ENCODE measurements at regions of chr7 and their contacts with region 1.

Region 1: DNA sequence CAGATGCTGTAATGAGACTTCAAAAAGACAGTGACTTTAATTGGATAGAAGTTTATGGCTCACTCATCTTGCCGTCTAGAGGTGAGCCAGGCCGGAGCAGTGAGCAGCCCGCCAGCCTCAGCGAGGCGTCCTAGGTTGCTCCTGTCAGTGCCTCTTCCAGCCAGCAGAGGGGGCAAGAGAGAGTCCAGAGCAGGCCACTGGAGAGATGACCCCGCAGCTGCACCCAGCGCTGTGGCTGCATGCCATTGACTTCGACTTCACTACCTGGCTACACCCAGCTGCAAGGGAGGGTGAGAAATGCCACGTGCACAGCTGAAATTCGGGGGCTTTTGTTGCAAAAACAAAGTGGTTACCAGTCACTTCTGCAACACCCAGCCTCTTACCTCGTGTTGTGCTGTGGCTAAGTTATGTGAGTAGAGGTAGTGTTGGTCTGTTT is 26.5 kb downstream of the NUB1 start:
- DNase-seq: peak; percentile 90
- ATAC-seq: peak; percentile 96

Region 2: GRCh38 chr7:151432791-151433521 is 64.8 kb after region 1 on chr7:
- intact Hi-C with region 1: no loop called
- DNase-seq: no peak
- ATAC-seq: no peak

Region 3: DNA sequence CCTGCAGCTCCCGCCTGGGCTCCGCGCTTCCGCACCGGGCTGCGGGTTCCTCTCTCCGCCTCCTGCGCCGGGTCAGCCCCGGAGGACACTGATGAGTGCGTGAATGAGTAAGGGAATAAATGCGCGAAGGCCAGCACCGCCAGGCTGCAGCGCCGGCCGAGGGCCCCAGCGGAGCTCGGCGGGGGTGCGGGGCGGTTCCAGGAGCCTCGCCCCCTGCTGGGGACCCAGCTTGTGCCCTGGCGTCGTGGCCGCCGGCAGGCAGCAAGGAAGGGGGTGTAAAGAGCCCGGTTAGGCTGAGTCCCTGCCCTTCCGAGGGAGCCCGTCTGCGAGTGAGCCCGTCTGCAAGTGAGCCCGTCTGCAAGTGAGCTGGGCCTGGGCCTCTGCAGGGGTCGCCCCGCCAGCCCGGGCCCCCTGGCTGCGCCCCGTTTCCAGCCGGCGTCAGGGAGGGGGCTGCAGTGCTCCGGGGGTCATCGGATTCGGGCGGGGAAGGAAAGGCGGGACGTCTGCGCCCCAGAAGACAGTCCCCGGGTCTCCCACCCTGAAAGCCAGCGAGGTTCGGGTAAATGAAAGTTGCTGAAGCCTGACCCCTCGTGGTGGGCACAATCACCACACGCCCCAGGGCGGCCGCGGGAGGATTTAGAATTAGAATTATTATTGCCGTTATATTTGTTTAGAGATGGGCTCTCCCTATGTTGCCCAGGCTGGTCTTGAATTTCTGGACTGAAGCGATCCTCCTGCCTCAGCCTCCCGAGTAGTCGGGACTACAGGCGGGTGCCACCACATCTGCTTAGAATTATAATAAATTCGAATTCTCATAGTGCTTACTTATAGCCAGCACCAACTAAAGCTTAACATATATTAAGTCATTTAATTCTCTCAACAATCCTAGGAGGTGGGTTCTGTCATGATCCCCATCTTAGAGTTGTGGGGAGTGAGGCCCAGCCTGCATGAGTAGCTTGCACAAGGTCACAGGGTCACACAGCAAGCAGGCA is 80.4 kb after region 1 on chr7:
- intact Hi-C with region 1: loop called (anchors 10 kb)
- DNase-seq: peak; percentile 80
- ATAC-seq: peak; percentile 92

Region 4: GRCh38 chr7:151539088-151539671 is 171.0 kb after region 1 on chr7:
- intact Hi-C with region 1: no loop called
- DNase-seq: no peak
- ATAC-seq: peak; percentile 89

Measured in left ventricle myocardium superior (tissue), 1 donor.